ENCODE measurements at regions of chr7 and their contacts with region 1.

Region 1: DNA sequence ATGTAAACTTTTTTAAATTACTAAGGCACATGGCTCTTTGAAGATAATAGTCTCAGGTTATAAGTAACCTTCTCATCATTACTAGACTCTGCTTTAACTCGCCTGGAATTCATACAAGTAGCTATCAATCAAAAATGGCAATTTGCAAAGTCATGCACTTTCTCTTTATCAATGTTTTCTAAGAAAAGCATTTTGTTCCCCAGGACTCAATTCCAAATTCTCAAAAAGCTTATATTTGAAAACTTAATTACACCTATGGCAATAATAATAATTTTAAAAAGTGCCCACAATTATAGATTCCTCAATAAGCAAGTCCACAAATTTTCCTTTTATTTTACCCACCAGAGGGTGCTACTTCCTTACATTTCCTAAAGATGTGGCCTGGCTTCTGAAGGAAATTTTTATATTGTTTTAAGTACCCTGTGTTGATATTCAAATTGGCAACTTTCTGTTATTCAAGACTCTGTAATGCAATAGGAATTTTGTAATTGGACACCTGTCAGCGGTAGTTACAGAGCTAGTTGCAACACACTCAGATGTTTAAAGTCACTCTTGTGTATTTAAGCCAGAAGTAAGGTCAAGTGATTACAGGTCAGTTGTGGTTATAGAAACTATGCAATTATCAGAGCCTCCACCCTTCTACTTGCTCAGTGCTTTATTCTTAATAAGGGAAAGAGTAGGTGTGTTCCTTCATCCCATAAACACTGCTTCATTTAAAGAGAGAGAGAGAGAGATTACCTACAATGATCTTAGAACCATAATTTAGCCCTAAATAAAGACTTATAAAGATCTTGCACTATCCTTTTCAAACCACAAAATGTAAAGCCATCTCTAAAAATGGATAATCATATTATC is 47.1 kb upstream of the HYAL4 start:
- DNase-seq: peak; percentile 66
- ATAC-seq: peak; percentile 91
- H3K4me3 ChIP-seq: no peak overlapping the region
- H3K27ac ChIP-seq: no peak overlapping the region
- H3K4me1 ChIP-seq: peaks cover 3 to 13% of the 10 kb centered on the region in 2 experiments; a peak in 3 of 4 replicates
- H3K27me3 ChIP-seq: no peaks in the 10 kb centered on the region
- CTCF ChIP-seq: peak; percentile 41 to 85 (median 60); a peak in 4 of 6 replicates
- POLR2A ChIP-seq: no peak
- RAD21 ChIP-seq: peak; percentile 88

Region 2: GRCh38 chr7:122402235-122402634 is 1395.7 kb before region 1 on chr7:
- CTCF ChIA-PET with region 1: no interaction called
- POLR2A ChIA-PET with region 1: no interaction called
- RAD21 ChIA-PET with region 1: no interaction called
- intact Hi-C with region 1: no loop called
- DNase-seq: no peak
- ATAC-seq: no peak
- H3K4me3 ChIP-seq: no peak overlapping the region
- H3K27ac ChIP-seq: no peak overlapping the region
- H3K4me1 ChIP-seq: no peaks in the 10 kb centered on the region
- H3K27me3 ChIP-seq: no peaks in the 10 kb centered on the region
- CTCF ChIP-seq: no peak
- POLR2A ChIP-seq: no peak
- RAD21 ChIP-seq: no peak

Region 3: GRCh38 chr7:123580406-123581161 is 217.3 kb before region 1 on chr7:
- CTCF ChIA-PET with region 1: no interaction called
- POLR2A ChIA-PET with region 1: no interaction called
- RAD21 ChIA-PET with region 1: no interaction called
- intact Hi-C with region 1: loop called (anchors 5 kb)
- DNase-seq: peak; percentile 35
- ATAC-seq: peak; percentile 98
- H3K4me3 ChIP-seq: no peak overlapping the region
- H3K27ac ChIP-seq: no peak overlapping the region
- H3K4me1 ChIP-seq: no peaks in the 10 kb centered on the region
- H3K27me3 ChIP-seq: no peaks in the 10 kb centered on the region
- CTCF ChIP-seq: peak; percentile 58 to 85 (median 82)
- POLR2A ChIP-seq: no peak
- RAD21 ChIP-seq: peak; percentile 79

Region 4: DNA sequence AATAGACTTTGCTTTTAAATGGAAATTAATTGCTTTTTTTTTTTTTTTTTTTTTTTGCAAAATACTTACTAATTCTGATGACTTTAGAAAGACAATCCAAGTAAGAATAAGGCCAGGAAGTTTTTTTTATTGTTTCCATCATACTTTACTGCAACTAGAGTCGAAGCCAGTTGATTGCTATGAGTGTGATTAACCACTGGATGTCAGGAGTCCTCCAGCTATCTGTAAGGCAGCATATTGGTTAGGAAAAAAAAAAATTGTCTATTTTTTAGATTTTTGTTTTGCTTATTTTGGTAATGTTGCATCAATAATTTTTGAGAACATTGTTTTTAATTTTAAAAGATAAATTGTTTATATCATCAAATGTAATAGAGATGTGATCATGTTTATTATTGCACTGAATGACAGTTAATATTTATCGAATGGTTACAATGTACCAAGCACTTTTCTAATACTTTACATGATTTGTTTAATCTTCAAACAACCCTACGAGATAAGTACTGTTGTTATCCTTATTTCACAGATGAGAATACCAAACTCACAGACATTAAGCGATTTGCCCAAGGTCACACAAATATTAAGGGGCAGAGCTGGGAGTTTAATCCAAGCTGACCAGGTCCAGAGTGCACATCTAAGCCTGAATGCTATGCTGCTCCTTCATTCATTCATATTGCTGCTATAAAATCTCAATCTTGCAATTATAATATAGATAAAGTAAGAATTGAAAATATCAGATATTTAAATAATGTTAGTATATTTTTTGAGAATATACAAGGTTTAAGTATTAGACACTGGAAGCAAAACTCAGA is 162.1 kb before region 1 on chr7:
- CTCF ChIA-PET with region 1: interaction called, 6 read pairs
- POLR2A ChIA-PET with region 1: no interaction called
- RAD21 ChIA-PET with region 1: no interaction called
- intact Hi-C with region 1: loop called (anchors 2 kb)
- DNase-seq: no peak
- ATAC-seq: peak; percentile 75; the same call in 1 of the 2 replicates
- H3K4me3 ChIP-seq: no peak overlapping the region
- H3K27ac ChIP-seq: no peak overlapping the region
- H3K4me1 ChIP-seq: peaks cover 0 to 8% of the 10 kb centered on the region in 2 experiments; a peak in 1 of 4 replicates
- H3K27me3 ChIP-seq: no peaks in the 10 kb centered on the region
- CTCF ChIP-seq: peak; percentile 49 to 74 (median 65)
- POLR2A ChIP-seq: no peak
- RAD21 ChIP-seq: peak; percentile 86

Region 5: DNA sequence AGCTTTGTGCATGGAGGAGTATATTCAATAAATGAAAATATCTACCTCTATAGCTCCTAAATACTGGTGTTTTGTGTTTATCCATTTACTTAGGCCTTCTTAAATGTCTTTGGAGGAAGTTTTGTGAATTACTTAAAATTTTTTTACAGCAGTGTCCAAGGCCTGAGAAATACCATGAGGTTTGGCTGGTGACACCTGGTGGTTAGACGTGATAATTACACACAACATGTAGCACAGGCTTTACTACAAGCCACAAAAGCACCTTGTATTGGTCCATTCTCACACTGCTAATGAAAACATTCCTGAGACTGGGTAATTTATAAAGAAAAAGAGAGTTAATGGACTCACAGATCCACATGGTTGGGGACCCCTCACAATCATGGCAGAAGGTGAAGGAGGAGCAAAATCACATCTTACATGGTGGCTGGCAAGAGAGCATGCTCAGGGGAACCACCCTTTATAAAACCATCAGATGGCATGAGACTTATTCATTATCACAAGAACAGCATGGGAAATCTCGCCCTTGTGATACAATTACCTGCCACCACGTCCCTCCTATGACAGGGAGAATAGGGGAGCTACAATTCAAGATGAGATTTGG is 67.7 kb after region 1 on chr7:
- CTCF ChIA-PET with region 1: interaction called, 42 read pairs
- POLR2A ChIA-PET with region 1: interaction called, 3 read pairs
- RAD21 ChIA-PET with region 1: interaction called in 1 of 2 experiments, 3 read pairs
- intact Hi-C with region 1: loop called (anchors 1 kb)
- DNase-seq: peak; percentile 49
- ATAC-seq: peak; percentile 98
- H3K4me3 ChIP-seq: no peak overlapping the region
- H3K27ac ChIP-seq: no peak overlapping the region
- H3K4me1 ChIP-seq: no peaks in the 10 kb centered on the region
- H3K27me3 ChIP-seq: no peaks in the 10 kb centered on the region
- CTCF ChIP-seq: peak; percentile 55 to 72 (median 65); a peak in 5 of 6 replicates
- POLR2A ChIP-seq: no peak
- RAD21 ChIP-seq: peak; percentile 69

Region 6: DNA sequence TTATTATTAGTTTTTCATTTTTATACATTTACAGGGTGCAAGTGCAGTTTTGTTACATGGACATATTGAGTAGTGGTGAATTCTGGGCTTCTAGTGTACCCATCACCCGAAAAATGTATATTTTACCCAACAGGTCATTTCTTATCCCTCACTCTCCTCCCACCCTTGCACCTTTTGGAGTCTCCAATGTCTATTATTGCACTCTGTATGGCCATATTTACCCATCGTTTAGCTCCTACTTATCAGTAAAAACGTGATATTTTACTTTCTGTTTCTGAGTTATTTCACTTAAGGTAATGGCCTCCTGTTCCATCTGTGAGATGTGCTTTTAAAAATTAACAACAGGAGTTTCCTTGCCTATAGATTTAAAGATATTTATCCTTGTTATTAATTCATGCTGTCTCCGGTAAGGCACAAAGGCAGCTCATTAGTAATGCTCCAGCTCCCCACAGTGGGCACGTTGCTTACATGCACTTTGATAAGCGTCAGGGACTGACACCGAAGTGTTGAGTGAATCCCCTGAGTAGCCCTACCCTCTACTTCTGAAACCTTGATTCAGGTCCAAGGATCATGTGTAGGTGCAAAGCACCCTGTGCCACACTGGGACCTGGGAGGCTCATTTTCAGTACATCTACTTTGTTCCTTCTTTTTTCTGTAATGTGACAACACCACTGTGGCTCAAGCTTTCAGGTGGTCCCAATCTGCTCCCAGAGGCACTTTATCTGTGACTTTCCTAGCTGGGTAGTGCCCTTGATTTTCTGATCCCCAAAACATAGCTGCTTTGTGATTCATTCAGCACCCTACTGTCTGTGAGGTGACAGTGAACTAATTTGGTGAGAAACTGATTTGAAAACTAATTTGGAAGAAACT is 74.3 kb after region 1 on chr7:
- CTCF ChIA-PET with region 1: interaction called, 33 read pairs
- POLR2A ChIA-PET with region 1: no interaction called
- RAD21 ChIA-PET with region 1: interaction called in 1 of 2 experiments, 5 read pairs
- intact Hi-C with region 1: loop called (anchors 1 kb)
- DNase-seq: peak; percentile 51
- ATAC-seq: peak; percentile 99
- H3K4me3 ChIP-seq: no peak overlapping the region
- H3K27ac ChIP-seq: no peak overlapping the region
- H3K4me1 ChIP-seq: no peaks in the 10 kb centered on the region
- H3K27me3 ChIP-seq: no peaks in the 10 kb centered on the region
- CTCF ChIP-seq: peak; percentile 54 to 67 (median 58); a peak in 5 of 6 replicates
- POLR2A ChIP-seq: no peak
- RAD21 ChIP-seq: peak; percentile 85

Region 7: DNA sequence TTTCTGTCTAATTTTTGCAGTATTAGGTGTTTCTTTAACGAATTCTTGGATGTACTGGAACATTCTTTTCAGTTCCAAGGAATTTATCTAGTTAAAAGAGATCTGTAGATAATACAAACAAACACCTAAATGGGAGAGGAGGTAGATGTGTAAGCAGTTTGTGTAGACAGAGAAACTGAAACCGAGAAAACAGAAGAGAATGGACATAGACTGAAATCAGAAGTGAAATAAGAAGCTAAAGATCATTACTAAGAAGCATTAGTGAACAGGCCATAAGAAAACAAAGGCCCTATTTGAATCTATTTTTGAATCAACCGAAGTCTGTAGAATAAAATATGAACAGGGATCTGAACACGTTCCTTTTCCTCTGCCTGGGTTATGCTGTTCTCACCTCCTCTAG is 261.5 kb after region 1 on chr7:
- CTCF ChIA-PET with region 1: no interaction called
- POLR2A ChIA-PET with region 1: no interaction called
- RAD21 ChIA-PET with region 1: no interaction called
- intact Hi-C with region 1: no loop called
- DNase-seq: no peak
- ATAC-seq: no peak
- H3K4me3 ChIP-seq: no peak overlapping the region
- H3K27ac ChIP-seq: no peak overlapping the region
- H3K4me1 ChIP-seq: no peaks in the 10 kb centered on the region
- H3K27me3 ChIP-seq: no peaks in the 10 kb centered on the region
- CTCF ChIP-seq: no peak
- POLR2A ChIP-seq: no peak
- RAD21 ChIP-seq: no peak

Region 8: GRCh38 chr7:124784879-124785818 is 987.2 kb after region 1 on chr7:
- CTCF ChIA-PET with region 1: interaction called, 5 read pairs
- POLR2A ChIA-PET with region 1: no interaction called
- RAD21 ChIA-PET with region 1: no interaction called
- intact Hi-C with region 1: loop called (anchors 10 kb)
- DNase-seq: peak; percentile 47
- ATAC-seq: peak; percentile 94
- H3K4me3 ChIP-seq: no peak overlapping the region
- H3K27ac ChIP-seq: no peak overlapping the region
- H3K4me1 ChIP-seq: no peaks in the 10 kb centered on the region
- H3K27me3 ChIP-seq: no peaks in the 10 kb centered on the region
- CTCF ChIP-seq: peak; percentile 79 to 88 (median 84)
- POLR2A ChIP-seq: no peak
- RAD21 ChIP-seq: peak; percentile 94

Region 9: DNA sequence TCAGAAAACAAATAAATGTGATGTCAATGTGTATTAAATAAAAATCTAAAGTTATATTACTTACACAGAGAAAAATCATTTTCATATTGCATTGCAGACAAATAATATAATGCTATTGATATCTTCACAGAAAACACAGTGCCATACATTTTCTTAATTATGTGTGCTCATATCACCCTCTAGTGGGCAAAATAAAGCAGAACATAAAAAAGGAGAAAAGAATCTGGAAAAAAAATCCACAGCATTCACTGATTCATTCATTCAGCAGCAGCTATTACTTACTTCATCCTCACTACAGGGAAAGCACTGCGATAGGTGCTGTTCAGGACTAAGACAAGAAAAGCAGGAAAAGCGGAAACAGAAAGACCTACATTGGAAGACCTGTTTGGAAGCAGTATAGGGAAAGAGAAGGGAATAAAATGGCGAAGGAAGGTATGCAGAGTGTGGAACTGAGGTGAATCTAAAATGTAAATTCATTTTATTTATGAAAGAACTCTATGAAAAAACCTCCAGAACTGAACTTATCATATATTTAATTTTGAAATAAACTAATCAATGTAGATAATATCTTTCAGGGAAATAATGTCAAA is 1058.5 kb after region 1 on chr7:
- CTCF ChIA-PET with region 1: no interaction called
- POLR2A ChIA-PET with region 1: no interaction called
- RAD21 ChIA-PET with region 1: no interaction called
- intact Hi-C with region 1: loop called (anchors 5 kb)
- DNase-seq: peak; percentile 32
- ATAC-seq: 0 out of 2 replicates have a peak, but pooled peaks have one; percentile 60
- H3K4me3 ChIP-seq: no peak overlapping the region
- H3K27ac ChIP-seq: no peak overlapping the region
- H3K4me1 ChIP-seq: no peaks in the 10 kb centered on the region
- H3K27me3 ChIP-seq: no peaks in the 10 kb centered on the region
- CTCF ChIP-seq: peak; percentile 45 to 75 (median 56); a peak in 5 of 6 replicates
- POLR2A ChIP-seq: no peak
- RAD21 ChIP-seq: peak; percentile 64